ENCODE measurements at regions of chr10 and their contacts with region 1.

Region 1: DNA sequence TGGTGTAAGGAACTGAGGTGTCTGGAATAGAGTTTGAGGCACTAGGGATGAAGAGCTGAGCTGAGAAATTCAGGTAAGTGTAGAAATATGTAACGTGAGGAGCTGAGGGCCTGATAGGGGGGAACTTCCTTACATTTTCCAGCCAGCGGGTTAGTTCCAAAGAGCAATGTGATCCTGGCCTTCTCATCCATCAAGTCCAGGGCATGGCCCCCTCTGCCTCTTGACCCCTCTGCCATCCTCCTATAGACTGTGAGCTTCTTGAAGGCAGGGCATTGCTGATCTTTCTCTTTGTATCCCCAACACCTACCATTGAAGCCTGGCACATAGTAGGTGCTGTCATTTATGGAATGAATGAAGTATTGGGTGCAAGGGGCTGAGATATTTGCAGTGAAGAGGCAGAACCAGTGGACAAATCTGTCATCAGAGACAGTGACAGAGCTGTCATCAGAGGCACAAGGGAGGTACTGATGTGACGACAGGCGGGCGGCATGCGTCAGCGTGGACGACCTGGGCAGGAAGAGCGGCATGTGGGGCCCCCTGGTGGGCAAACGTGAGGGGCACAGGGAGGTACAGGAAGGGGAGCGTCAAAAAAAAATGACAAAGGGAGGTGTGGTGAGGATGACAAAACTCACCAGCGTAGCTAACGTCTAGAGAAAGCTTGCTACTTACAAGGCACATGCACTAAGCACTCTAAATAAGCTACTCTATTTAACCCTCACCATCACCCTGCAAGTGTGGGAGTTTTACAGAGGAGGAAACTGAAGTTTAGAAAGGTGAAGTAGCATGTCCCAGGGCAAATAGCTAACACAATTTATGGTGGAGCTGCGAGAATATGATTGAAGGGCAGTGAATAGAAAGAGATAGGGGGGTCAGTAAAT is 5.2 kb upstream of the CAMK2G start:
- DNase-seq: peak; percentile 92
- ATAC-seq: peak; percentile 90

Region 2: DNA sequence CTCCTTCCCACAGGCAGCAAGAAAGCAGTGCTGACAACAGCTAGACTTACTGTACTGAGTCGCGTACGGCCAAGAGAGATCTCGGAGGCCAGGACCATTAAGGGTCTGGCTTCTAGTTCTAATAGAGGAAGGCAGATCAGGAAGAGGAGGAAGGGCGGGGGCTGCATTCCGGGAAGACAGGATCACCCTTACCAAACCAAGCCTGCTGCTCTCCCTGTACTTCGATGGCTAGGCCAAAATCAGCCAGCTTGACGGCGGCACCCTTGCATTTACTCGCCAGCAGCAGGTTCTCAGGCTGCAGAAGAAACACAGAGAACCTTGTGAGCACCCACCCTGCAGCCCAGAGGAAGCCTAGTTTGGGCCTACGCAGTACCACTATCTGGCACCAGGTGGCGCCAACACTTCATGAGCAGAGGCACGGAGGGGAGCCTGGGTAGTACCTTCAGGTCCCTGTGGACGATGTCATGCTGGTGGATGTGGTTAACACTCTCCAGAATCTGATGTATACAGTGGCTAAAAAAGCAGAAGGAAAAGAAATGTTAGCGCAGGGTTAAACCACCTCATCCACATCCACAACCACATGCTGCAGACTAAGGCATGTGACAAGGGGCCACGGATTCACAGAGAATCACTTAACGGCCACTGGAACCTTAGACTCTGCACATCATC is 30.6 kb before region 1 on chr10:
- intact Hi-C with region 1: loop called (anchors 5 kb)
- DNase-seq: peak; percentile 90
- ATAC-seq: peak; percentile 89

Region 3: DNA sequence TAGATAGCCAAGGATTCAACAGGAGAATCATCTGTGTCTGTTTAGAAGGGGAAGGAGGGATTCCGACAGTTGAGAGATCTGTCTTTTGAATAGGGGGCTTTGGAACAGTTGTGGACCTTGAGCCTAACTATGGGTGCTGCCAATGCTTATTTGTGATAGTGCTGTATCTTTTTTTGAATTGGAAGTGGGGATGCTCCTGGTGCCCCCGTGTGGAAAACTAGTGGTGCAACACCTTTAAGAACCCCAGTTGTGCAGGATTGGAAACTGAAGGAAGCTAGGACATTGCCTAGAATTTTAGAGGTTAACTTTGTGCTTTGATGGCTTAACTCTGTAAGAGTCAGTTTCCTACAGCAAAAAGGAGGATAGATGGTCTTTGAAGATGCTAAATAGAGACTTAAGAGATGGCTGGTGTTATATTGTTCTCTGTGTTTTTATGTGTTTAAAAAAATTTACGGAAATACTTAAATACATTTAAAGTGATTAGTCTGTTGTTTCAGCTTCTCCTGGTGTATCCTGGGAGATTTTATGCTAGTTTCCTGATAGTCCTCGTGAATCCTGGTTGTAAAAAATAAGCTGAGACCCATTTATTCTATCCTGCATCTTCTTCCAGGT is 201.8 kb after region 1 on chr10:
- intact Hi-C with region 1: loop called (anchors 10 kb)
- DNase-seq: no peak
- ATAC-seq: peak; percentile 64